ENCODE measurements at regions of chr13 and their contacts with region 1.

Region 1: DNA sequence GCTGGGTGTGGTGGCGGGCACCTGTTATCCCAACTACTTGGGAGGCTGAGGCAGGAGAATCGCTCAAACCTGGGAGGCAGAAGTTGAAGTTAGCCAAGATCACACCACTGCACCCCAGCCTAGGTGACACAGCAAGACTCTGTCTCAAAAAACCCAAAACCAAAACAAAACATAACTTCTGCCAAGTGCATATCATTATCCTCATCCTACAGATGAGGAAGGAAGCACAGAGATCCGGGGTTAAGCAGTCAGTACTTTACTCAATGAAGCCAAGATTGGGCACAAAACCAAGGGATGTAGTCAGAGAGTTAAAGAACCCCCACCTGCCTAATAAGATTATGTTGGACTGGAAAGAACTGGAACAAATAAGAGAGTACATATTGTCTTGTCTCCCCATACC is 5.5 kb upstream of the TMTC4 start:
- DNase-seq: no peak
- H3K4me3 ChIP-seq: no peak overlapping the region
- CTCF ChIP-seq: no peak
- POLR2A ChIP-seq: no peak

Region 2: GRCh38 chr13:100630555-100630954 is 49.6 kb before region 1 on chr13:
- intact Hi-C with region 1: loop called (anchors 2 kb)
- DNase-seq: no peak
- H3K4me3 ChIP-seq: no peak overlapping the region
- CTCF ChIP-seq: no peak
- POLR2A ChIP-seq: no peak

Region 3: GRCh38 chr13:101098873-101099272 is 418.7 kb after region 1 on chr13:
- intact Hi-C with region 1: no loop called
- DNase-seq: no peak
- H3K4me3 ChIP-seq: no peak overlapping the region
- CTCF ChIP-seq: no peak
- POLR2A ChIP-seq: no peak